ENCODE measurements at regions of chr11 and their contacts with region 1.

Region 1: GRCh38 chr11:7098235-7098832 is 9.5 kb downstream of the RBMXL2 start:
- DNase-seq: peak; percentile 67
- H3K4me3 ChIP-seq: no peak overlapping the region
- H3K27ac ChIP-seq: no peak overlapping the region
- H3K4me1 ChIP-seq: no peaks in the 10 kb centered on the region
- H3K27me3 ChIP-seq: peaks cover 0 to 11% of the 10 kb centered on the region in 2 experiments
- CTCF ChIP-seq: peak; percentile 37 to 51
- POLR2A ChIP-seq: no peak

Region 2: DNA sequence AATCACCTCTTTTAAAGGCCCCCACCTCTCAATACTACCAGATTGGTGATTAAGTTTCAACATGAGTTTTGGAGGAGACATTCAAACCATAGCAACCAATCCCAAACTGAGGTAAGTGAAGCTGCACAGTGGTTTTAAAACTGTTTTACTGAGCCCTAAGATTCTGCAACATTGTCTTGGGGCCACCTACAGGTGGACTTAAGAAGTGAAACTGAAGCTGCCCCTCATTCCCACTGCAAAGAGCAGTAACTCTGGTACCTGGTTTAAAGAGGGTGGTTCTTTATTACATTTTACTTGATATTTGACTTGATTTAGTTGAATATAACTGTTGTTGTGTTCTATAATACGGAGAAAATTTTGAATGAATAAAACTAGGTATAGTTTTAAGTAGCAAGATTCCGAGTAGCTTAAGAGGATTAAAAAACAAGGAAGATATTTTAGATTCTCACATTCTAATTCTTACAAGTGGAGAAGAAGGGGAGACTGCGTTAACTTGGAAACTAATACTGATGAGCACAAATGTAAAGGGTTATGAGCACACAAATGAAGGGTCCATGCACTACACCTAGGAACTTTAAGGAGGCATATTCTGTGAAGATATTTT is 180.1 kb after region 1 on chr11:
- CTCF ChIA-PET with region 1: interaction called, 45 read pairs
- POLR2A ChIA-PET with region 1: no interaction called
- dilution Hi-C with region 1: no loop called
- intact Hi-C with region 1: loop called (anchors 1 kb)
- DNase-seq: peak; percentile 42
- H3K4me3 ChIP-seq: no peak overlapping the region
- H3K27ac ChIP-seq: no peak overlapping the region
- H3K4me1 ChIP-seq: no peaks in the 10 kb centered on the region
- H3K27me3 ChIP-seq: no peaks in the 10 kb centered on the region
- CTCF ChIP-seq: peak; percentile 46 to 64
- POLR2A ChIP-seq: no peak

Region 3: DNA sequence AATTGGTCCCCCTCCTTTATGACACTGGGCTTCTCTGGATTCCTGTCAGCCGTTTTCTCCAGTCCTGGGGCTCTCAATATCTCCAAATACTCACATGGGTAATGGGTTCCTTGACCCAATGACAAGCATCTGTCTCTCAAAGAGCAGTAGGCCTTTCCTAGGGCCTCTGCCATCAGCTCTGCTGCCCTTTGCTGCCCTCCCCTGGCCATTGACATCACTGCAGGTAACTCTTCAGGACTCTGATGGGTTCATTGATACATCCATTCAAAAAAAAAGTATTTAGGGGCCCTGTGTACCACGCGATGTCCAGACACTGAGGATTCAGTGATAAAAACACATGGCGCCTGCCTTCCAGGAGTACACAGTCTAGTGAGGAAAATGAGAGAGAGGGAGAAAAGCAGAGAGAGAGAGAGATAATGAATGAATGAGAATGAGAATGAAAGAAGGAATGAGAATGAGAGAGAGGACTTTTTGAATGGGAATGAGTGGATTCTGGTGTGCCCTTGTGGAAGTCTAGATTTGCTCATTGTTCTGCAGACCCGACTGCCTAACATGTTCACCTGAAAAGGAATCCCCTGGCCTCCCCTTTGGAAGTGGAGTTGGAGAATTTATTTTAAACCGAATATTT is 344.4 kb after region 1 on chr11:
- CTCF ChIA-PET with region 1: interaction called, 104 read pairs
- POLR2A ChIA-PET with region 1: no interaction called
- dilution Hi-C with region 1: no loop called
- intact Hi-C with region 1: loop called (anchors 1 kb)
- DNase-seq: peak; percentile 63
- H3K4me3 ChIP-seq: no peak overlapping the region
- H3K27ac ChIP-seq: no peak overlapping the region
- H3K4me1 ChIP-seq: no peaks in the 10 kb centered on the region
- H3K27me3 ChIP-seq: peaks cover 2 to 11% of the 10 kb centered on the region in 2 experiments
- CTCF ChIP-seq: peak; percentile 78 to 80
- POLR2A ChIP-seq: no peak

Region 4: DNA sequence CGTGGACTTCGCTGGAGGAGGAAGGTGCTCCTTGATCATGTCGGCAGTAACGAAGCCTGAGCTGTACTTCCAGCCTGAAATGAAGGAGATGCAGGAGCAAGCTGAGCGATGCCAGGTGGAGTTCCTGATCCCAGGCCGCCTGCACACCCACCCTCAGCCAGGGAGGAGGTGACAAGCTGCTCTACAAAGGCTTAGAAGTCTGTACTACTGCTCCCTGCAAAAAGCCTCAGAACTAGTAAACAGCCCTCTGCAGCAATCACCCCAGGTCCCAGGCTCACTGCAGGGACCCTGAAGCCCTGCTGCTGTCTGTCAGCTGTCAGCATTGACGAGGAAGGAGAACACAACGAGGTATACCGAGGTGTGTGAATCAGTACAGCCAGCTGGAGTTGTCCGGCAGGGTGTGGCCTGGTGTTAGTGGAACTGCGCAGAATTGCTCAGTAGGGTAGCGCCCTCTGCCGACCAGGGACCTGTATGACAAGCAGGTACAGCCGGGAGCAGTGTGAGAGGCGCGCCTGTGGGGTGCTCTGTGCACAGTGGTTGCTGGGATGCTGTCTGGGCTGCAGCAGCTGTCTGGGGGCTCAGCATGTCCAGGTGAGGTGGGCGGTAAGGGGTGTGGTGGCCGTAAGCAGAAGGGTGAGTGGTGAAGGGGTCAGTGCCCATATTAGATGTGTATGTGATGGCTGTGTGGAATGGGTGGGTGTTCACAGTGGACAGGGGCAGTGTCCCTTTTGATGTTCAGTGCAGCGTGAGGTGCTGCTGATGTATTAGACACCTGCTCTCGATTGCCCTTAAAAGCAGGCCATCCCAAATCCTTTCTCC is 567.3 kb after region 1 on chr11:
- CTCF ChIA-PET with region 1: interaction called, 12 read pairs
- POLR2A ChIA-PET with region 1: no interaction called
- dilution Hi-C with region 1: no loop called
- intact Hi-C with region 1: loop called (anchors 1 kb)
- DNase-seq: peak; percentile 69
- H3K4me3 ChIP-seq: no peak overlapping the region
- H3K27ac ChIP-seq: no peak overlapping the region
- H3K4me1 ChIP-seq: no peaks in the 10 kb centered on the region
- H3K27me3 ChIP-seq: no peaks in the 10 kb centered on the region
- CTCF ChIP-seq: peak; percentile 79 to 94
- POLR2A ChIP-seq: no peak

Region 5: DNA sequence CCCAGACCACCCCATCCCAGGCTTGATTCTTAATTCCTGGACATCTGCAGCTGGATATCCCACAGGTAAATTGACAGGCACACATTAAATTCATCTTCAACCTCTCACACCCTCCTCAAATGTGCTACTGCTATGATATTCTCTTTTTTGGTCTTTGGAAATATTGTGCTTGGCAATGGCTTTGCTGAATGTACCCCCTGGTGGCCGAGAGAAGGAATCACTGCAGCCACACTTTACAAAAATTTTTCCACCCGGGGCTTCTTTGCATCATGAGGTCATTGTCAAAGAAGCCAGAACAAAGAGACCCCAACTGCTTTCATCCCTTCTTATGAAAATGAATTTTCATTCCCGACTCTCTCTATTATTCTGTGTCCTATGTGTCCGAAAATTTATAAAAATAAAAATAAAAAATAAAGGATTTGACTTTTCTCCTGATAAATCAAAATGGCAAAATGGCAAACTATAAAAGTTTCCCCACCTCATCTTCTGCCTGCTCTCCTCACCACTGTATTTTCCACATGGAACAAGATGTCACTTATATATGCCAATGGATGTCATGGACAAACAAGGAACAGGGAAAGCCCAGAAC is 590.0 kb after region 1 on chr11:
- CTCF ChIA-PET with region 1: interaction called, 17 read pairs
- POLR2A ChIA-PET with region 1: no interaction called
- dilution Hi-C with region 1: no loop called
- intact Hi-C with region 1: loop called (anchors 1 kb)
- DNase-seq: peak; percentile 36
- H3K4me3 ChIP-seq: no peak overlapping the region
- H3K27ac ChIP-seq: no peak overlapping the region
- H3K4me1 ChIP-seq: no peaks in the 10 kb centered on the region
- H3K27me3 ChIP-seq: peaks cover 46 to 50% of the 10 kb centered on the region in 2 experiments
- CTCF ChIP-seq: peak; percentile 72 to 77
- POLR2A ChIP-seq: no peak

Region 6: DNA sequence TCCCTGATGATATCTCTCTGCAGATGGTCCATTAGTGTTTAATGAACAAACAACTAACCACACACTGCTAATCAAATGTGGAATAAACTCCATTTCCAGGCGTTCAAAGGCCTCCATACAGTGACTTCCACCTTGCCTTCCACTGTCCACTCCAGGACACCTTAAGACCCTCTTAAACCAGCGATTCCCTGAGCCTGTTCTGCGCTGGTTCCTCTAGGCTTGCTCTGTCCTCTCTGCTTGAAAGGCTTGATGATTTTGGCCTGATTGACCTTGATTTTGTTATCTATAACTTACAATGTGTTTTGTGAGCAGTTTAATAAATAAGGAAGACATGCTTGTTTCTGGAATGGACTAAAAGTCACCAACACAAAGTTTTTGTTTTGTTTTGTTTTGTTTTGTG is 595.9 kb after region 1 on chr11:
- CTCF ChIA-PET with region 1: interaction called, 19 read pairs
- POLR2A ChIA-PET with region 1: no interaction called
- dilution Hi-C with region 1: no loop called
- intact Hi-C with region 1: no loop called
- DNase-seq: no peak
- H3K4me3 ChIP-seq: no peak overlapping the region
- H3K27ac ChIP-seq: no peak overlapping the region
- H3K4me1 ChIP-seq: no peaks in the 10 kb centered on the region
- H3K27me3 ChIP-seq: peaks cover 37 to 40% of the 10 kb centered on the region in 2 experiments
- CTCF ChIP-seq: no peak
- POLR2A ChIP-seq: no peak